ENCODE measurements at regions of chr1 and their contacts with region 1.

Region 1: GRCh38 chr1:198763298-198763714 is 124.5 kb downstream of the PTPRC start:
- ATAC-seq: peak in 4 of 8 experiments; percentile 13 to 64 (median 44)
- H3K4me3 ChIP-seq: no peak overlapping the region
- H3K27ac ChIP-seq: no peak overlapping the region
- H3K4me1 ChIP-seq: no peaks in the 10 kb centered on the region

Region 2: DNA sequence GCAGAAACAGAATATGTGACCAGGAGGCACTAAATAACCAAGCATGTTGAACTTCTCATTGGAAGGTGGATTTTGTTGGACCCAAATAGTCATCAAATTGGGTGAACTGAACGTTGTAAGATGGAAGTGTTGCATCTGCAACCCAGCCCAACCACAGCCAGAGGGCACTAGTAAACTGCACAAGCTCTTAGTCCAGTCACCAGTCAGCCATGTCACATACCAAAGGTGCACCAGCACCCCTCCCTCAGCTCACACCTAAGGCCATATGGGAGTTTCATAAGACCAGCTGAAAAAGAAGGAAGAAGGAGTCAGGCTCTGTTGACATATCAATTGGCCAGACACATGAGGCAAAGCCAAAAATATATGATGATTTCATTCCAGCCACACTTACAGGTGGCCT is 782.5 kb after region 1 on chr1:
- in situ Hi-C with region 1: loop called in 5 of 9 experiments (anchors 10 to 25 kb)
- ATAC-seq: peak in 2 of 8 experiments; percentile 25 to 43
- H3K4me3 ChIP-seq: no peak overlapping the region
- H3K27ac ChIP-seq: no peak overlapping the region
- H3K4me1 ChIP-seq: peaks cover 0 to 2% of the 10 kb centered on the region in 2 donors